ENCODE measurements at regions of chr1 and their contacts with region 1.

Region 1: DNA sequence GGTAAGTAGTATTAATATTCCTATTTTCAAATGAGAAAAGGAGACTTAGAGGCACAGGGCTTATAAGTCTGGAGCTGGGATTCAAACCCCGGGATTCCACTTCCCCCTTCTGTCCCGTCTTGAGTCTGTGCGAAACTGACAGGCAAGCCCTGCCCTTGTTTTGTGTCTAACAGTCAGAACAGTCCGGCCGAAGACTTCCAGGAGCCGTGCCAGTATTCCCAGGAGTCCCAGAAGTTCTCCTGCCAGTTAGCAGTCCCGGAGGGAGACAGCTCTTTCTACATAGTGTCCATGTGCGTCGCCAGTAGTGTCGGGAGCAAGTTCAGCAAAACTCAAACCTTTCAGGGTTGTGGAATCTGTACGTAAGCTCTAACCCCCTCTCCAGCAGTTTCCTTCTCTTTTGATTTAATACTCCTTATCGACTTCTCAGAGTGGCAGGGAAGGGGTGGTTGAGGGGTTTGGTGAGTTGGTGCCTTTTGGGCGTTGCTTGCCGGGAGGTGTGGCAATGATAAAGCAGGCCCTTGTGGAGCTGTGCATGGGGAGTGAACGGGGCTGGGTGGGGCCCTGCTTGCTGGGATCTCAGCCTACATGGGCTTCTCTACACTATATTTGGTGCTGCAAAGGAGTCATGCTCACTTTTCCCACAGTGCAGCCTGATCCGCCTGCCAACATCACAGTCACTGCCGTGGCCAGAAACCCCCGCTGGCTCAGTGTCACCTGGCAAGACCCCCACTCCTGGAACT is 29.4 kb downstream of the IL6R start:
- DNase-seq: no peak

Region 2: DNA sequence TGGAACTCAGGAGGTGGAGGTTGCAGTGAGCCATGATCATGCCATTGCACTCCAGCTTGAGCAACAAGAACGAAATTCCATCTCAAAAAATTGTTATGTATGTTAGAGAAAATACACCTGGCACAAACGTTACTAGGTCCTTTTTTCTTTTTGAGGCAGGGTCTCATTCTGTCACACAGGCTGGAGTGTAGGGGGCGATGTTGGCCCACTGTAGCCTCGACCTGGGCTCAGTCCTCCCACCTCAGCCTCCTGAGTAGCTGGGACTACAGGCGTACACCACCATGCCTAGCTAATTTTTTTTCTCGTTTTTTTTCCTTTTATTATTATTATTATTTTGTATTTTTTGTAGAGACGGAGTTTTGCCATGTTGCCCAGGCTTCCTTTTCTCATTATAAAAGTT is 157.7 kb before region 1 on chr1:
- intact Hi-C with region 1: no loop called
- DNase-seq: no peak

Region 3: GRCh38 chr1:154371436-154371835 is 63.1 kb before region 1 on chr1:
- intact Hi-C with region 1: no loop called
- DNase-seq: no peak

Region 4: DNA sequence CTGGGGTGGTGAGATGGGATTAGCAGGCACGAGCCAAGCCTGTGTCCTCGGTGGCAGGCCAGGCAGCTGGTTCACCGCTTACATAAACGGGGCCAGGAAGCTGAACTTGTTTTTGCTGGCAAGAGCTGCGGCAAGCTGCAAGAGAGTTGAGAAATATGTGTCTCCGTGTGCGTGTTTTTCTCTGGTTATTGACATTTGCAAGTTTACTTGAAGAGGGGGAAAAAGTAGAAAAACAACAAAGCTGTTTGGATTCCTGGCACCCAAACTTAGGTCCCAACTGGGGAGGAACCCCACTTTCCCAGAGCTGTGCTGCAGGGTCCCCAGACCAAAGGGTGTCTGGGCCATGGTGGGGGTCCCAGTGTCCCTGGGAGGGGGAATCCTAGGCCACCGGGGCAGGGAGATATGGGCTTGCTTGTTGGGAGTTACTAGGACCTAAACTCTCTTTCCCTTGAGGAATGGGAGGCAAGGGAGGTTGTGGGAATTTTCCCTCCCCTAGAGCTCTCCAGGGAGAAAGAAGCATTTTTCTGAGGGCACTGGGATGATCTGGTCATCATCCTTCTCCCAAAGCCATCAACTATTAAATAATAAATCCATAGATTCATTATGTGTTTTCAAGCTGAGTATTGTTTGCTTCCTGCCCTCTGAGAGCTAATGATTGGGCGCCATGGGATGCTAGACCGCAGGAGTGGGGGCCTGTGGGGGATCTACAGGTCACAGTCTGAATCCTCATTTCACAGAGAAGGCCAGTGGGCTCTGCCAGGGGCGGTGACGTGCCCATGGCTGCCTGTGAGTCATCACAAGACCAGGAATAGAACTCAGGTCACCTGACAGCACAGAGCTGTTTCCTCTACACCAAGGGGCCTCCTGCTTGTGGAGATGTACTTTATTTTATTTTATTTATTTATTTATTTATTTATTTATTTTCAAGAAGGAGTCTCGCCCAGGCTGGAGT is 14.6 kb before region 1 on chr1:
- intact Hi-C with region 1: loop called (anchors 1 kb)
- DNase-seq: peak; percentile 92